Sigmoid colon (tissue), 7 donors: ENCODE measurements at regions of chr22 and their contacts with region 1.

Region 1: GRCh38 chr22:35921777-35922176 is 106.8 kb downstream of the RBFOX2 start:
- DNase-seq: peak; percentile 90
- H3K4me3 ChIP-seq: no peak overlapping the region
- H3K27ac ChIP-seq: peak overlapping the region; percentile 71 to 87 (median 80)
- H3K4me1 ChIP-seq: peaks cover 0 to 65% (median 57%) of the 10 kb centered on the region in 4 donors
- H3K27me3 ChIP-seq: no peaks in the 10 kb centered on the region
- CTCF ChIP-seq: peak in 3 of 4 experiments; percentile 29 to 58 (median 50)
- EP300 ChIP-seq: no peak
- POLR2A ChIP-seq: no peak

Region 2: GRCh38 chr22:35376728-35377472 is 544.9 kb before region 1 on chr22:
- intact Hi-C with region 1: loop called (anchors 10 kb)
- DNase-seq: peak; percentile 98
- H3K4me3 ChIP-seq: peak overlapping the region in 2 of 4 donors; percentile 2 to 20
- H3K27ac ChIP-seq: peak overlapping the region; percentile 67 to 87 (median 76)
- H3K4me1 ChIP-seq: peaks cover 0 to 36% (median 30%) of the 10 kb centered on the region in 4 donors
- H3K27me3 ChIP-seq: no peaks in the 10 kb centered on the region
- CTCF ChIP-seq: no peak
- EP300 ChIP-seq: peak in 2 of 4 donors; percentile 60 to 90
- POLR2A ChIP-seq: no peak

Region 3: DNA sequence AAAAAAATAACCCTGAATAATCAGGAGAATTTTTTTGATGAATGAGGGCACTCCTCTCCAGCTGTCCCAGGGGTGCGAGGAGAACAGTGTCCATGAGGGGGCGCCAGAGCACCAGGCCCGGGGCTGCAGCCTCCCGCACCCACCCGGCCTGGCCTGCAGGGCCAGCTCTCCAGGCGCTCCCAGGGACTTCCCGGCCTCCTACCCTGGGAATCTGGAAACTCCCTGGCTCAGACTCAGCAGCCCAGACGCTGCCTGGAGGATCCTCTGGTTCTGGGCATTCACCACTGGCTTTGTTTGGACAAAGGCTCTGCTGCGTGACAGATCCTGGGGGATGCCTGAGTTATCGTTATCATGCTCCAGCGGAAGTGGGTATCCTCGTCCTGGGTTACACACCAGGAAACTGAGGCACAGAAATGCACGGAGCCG is 490.9 kb before region 1 on chr22:
- intact Hi-C with region 1: loop called (anchors 5 kb)
- DNase-seq: peak; percentile 97
- H3K4me3 ChIP-seq: no peak overlapping the region
- H3K27ac ChIP-seq: peak overlapping the region; percentile 45 to 76 (median 73)
- H3K4me1 ChIP-seq: peaks cover 0 to 22% (median 19%) of the 10 kb centered on the region in 4 donors
- H3K27me3 ChIP-seq: no peaks in the 10 kb centered on the region
- CTCF ChIP-seq: peak; percentile 98 to 99 (median 99)
- EP300 ChIP-seq: peak in 3 of 4 donors; percentile 22 to 78 (median 55)
- POLR2A ChIP-seq: no peak

Region 4: DNA sequence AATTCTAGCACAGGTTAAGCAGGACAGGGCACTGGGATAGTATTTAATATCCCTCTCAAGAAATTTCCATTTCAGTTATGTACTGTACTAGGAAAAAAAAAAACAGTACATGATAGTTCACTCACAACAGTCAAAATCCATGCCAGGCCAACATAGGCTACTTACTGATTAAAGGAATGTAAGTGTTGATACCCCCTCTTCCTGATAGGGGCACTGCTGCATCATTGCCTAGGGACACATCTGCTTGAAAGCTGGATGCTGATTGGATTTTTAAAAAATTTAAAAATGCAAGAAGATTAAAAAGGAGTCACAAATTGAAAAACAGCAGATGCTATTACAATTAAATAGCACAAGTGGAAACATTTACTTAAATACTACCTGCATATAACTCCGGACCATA is 160.7 kb before region 1 on chr22:
- intact Hi-C with region 1: loop called (anchors 5 kb)
- DNase-seq: no peak
- H3K4me3 ChIP-seq: no peak overlapping the region
- H3K27ac ChIP-seq: no peak overlapping the region
- H3K4me1 ChIP-seq: peaks cover 0 to 8% (median 2%) of the 10 kb centered on the region in 4 donors
- H3K27me3 ChIP-seq: no peaks in the 10 kb centered on the region
- CTCF ChIP-seq: peak in 1 of 4 experiments; percentile 20
- EP300 ChIP-seq: no peak
- POLR2A ChIP-seq: no peak

Region 5: DNA sequence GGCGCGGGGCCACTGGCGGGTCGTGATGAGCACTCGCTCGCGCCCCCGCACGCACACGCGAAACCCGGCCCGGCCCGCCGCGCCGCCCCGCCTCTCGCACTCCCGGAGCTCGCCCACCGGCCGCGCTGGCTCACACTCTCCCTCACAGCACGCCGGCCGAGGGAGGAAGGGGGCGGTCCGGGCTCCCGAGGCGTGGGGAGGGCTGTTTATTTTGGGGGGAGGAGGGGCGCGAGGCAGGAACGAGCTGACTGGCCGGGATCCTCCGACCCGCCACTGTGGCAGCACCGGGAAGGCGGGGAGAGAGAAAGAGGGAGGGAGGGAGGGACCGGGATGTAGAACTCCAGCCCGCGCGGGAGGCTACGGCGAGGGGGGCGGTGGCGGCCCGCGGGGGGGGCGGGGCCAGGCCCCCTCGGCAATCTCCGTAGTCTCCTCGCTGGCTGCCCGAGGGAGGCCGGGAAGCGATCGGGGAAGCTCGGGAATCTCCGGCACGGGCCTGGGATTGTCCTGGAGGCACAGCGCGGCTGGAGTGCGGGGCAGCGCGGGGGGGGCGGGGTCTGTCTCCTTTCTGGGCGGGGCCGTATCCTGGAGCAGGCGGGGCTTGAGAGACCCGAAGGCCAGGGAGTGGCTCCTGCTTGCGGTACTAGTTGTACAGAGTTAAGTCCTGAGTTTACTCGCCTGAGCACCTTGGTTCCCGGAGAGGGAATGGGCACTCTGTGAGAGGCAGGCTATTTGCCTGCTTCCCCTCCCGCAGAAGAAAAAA is 107.0 kb after region 1 on chr22 and contains the start of gene RBFOX2:
- intact Hi-C with region 1: loop called (anchors 5 kb)
- DNase-seq: peak; percentile 99
- H3K4me3 ChIP-seq: peak within 1 kb of the TSS; percentile 64 to 95 (median 84)
- H3K27ac ChIP-seq: peak within 1 kb of the TSS; percentile 90 to 98 (median 97)
- H3K4me1 ChIP-seq: peaks cover 0 to 39% (median 27%) of the 10 kb centered on the region in 4 donors
- H3K27me3 ChIP-seq: no peaks in the 10 kb centered on the region
- CTCF ChIP-seq: no peak
- EP300 ChIP-seq: no peak
- POLR2A ChIP-seq: no peak
- total RNA-seq, gene RBFOX2: 138 to 164 (median 148) TPM

Region 6: DNA sequence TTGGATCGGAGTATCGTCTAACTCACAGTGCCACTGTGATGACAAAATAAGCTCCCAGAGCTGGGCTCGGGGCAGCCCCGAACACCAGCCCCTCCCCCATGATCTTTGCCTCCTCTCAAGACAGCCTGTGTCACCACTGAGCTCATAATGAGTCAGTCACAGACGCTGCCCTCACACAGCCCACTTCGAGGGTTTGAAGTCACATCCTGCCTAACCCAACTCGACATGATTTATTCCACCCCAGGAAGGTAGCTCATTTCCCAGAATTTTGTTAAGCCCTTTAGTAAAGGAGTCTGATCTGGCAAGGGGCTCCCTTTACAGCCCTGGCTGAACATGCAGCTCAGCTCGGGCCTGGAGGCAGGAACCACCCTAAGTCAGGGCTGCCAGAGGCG is 443.2 kb after region 1 on chr22:
- intact Hi-C with region 1: no loop called
- DNase-seq: peak; percentile 90
- H3K4me3 ChIP-seq: peak overlapping the region in 2 of 4 donors; percentile 4 to 15
- H3K27ac ChIP-seq: peak overlapping the region; percentile 98 to 100 (median 100)
- H3K4me1 ChIP-seq: peaks cover 3 to 100% (median 100%) of the 10 kb centered on the region in 4 donors
- H3K27me3 ChIP-seq: no peaks in the 10 kb centered on the region
- CTCF ChIP-seq: no peak
- EP300 ChIP-seq: peak in 2 of 4 donors; percentile 42 to 85
- POLR2A ChIP-seq: no peak